WTC11 (cell line): ENCODE measurements at regions of chr3 and their contacts with region 1.

Region 1: DNA sequence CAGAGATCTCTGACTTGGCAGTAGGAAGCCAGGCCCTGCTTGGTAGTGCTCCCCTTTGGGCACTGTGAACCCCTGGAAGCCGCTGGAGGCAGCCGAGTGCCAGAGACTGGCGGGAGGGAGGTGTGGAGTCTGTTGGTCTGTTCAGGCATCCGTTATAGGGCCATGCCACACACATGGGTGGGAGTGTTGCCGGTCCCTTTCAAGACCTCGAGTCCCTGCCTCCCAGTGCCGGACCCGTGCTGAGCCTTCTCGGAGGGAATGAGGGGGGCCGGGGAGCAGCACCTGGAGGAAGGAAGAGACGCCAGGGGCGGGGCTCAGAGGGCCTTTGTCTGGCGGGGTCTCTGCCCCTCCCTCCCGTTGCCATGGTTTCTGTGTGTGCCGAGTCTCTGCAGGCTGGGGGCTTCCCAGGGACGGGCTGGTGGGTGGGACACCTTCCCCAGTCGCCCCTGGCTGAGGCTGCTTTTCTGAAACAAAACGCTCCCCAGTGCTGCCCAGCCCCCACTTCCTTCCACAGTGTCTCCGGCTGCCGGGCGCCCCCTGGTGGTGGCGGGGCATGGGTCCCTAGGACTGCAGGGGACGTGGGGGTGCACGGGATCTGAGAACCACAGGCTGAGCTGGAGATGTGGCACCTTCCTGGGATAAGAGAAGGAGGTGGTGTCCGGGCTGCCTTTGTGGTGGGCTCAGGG is 10.0 kb downstream of the GNAI2 start:
- DNase-seq: peak; percentile 98
- ATAC-seq: peak; percentile 73
- H3K4me3 Mint-ChIP-seq: peak overlapping the region; percentile 40
- H3K27ac Mint-ChIP-seq: peak overlapping the region; percentile 91
- H3K4me1 Mint-ChIP-seq: peaks cover 59% of the 10 kb centered on the region
- H3K27me3 Mint-ChIP-seq: no peaks in the 10 kb centered on the region
- CTCF ChIP-seq: peak; percentile 99

Region 2: DNA sequence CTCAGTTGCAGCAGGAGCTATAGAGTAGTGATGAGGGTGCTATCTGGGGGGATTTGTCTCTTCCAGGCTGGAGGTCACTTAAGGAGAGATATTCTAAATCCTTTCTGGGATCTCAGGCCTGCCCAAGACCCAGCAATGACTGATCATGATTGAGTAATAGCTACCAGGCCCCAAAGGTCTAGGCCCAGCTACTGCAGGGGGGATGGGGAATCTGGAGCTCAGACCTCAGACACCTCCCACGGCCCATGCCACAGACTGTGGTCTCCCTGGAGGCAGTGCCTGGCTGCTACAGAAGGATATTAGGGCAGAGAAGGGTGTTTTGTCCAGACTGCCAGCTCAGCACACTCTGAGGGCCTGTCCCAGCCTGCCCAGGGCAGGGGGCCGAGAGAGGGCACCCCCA is 34.0 kb before region 1 on chr3:
- CTCF ChIA-PET with region 1: interaction called, 32 read pairs
- POLR2A ChIA-PET with region 1: no interaction called
- DNase-seq: no peak
- ATAC-seq: no peak
- H3K4me3 Mint-ChIP-seq: no peak overlapping the region
- H3K27ac Mint-ChIP-seq: no peak overlapping the region
- H3K4me1 Mint-ChIP-seq: peaks cover 6% of the 10 kb centered on the region; the same call in 1 of the 2 replicates
- H3K27me3 Mint-ChIP-seq: peaks cover 9% of the 10 kb centered on the region
- CTCF ChIP-seq: no peak

Region 3: GRCh38 chr3:50227390-50228183 is 18.4 kb before region 1 on chr3:
- CTCF ChIA-PET with region 1: interaction called, 154 read pairs
- POLR2A ChIA-PET with region 1: interaction called, 22 read pairs
- DNase-seq: peak; percentile 92
- ATAC-seq: peak; percentile 75
- H3K4me3 Mint-ChIP-seq: peak overlapping the region; percentile 96
- H3K27ac Mint-ChIP-seq: peak overlapping the region; percentile 89
- H3K4me1 Mint-ChIP-seq: peaks cover 24% of the 10 kb centered on the region
- H3K27me3 Mint-ChIP-seq: peaks cover 4% of the 10 kb centered on the region
- CTCF ChIP-seq: peak; percentile 61

Region 4: DNA sequence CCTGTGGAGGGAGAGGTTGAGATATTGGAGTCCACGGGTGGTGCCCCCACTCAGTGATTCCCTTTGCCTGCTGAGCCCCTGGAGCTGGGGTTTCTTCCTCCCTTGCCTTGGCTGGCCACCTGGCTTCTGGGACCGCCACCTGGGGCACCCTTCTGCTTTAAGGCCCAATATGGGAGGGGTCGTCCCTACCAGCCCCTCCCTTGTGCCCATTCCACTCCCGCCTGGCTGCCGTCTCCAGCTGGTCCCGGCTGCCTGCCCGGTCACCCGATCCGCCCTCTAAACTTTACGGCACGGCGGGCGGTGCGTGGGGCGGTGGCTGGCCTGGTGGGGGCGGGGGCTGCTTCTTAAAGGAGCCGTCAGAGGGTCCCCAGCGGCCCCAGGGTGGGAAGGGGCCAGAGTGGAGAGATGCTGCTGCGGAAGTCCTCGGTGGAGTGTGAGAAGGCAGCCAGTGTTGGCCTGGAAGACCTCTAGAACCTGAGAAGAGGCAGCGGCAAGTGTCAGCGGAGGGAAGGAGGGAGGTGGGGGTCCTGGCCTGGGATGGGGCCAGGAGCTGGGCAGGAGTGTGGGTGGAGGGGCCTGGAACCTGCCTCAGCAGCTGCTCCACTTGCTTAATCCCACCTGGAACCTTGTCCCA is 21.4 kb after region 1 on chr3:
- CTCF ChIA-PET with region 1: interaction called, 49 read pairs
- POLR2A ChIA-PET with region 1: interaction called, 10 read pairs
- DNase-seq: peak; percentile 52
- ATAC-seq: no peak
- H3K4me3 Mint-ChIP-seq: peak overlapping the region; percentile 24; the same call in 1 of the 2 replicates
- H3K27ac Mint-ChIP-seq: no peak overlapping the region
- H3K4me1 Mint-ChIP-seq: peaks cover 51% of the 10 kb centered on the region
- H3K27me3 Mint-ChIP-seq: no peaks in the 10 kb centered on the region; the same call in none of the 2 replicates
- CTCF ChIP-seq: no peak

Region 5: DNA sequence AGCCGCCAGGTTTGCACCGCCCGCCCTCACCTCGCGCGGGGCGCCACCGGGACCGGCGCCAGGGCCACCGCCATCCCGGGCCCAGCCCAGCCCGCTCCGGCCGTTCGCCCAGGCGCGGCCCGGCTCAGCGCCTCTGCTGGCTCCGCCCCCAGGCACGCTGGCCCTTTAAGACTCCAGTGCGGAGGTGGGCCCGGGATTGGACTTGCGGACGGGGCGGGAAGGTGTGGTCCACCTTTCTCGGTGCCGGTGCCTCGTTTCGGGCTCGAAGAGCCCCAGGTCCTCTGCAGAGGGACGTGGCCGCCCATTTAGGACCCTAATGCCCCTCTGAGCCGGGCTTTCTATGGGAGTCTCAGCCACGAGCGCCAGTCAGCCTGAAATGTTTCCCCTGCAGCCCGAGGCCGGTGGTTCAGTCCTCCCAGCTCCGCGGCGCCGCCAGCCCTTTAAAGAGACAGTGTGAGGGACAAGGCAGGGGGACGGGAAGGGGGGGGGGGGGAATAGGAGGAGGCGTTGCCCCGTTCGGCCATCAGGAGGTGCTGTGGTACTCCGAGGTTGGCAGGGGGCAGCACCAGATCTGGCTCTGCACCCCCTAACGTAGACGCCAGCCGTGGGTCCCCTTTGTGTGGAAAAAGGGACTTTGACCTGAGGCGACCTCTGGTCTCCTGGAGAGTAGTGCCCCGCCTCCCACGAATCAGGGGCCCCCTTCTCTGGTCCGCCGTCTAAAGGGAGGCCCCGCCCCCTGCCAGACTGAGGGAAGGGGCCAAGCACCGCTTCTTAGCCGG is 75.6 kb after region 1 on chr3:
- CTCF ChIA-PET with region 1: interaction called, 10 read pairs
- POLR2A ChIA-PET with region 1: interaction called, 3 read pairs
- DNase-seq: peak; percentile 90
- ATAC-seq: peak; percentile 71
- H3K4me3 Mint-ChIP-seq: peak overlapping the region; percentile 88
- H3K27ac Mint-ChIP-seq: peak overlapping the region; percentile 97
- H3K4me1 Mint-ChIP-seq: peaks cover 40% of the 10 kb centered on the region
- H3K27me3 Mint-ChIP-seq: no peaks in the 10 kb centered on the region
- CTCF ChIP-seq: peak; percentile 56; the same call in 1 of the 2 replicates

Region 6: DNA sequence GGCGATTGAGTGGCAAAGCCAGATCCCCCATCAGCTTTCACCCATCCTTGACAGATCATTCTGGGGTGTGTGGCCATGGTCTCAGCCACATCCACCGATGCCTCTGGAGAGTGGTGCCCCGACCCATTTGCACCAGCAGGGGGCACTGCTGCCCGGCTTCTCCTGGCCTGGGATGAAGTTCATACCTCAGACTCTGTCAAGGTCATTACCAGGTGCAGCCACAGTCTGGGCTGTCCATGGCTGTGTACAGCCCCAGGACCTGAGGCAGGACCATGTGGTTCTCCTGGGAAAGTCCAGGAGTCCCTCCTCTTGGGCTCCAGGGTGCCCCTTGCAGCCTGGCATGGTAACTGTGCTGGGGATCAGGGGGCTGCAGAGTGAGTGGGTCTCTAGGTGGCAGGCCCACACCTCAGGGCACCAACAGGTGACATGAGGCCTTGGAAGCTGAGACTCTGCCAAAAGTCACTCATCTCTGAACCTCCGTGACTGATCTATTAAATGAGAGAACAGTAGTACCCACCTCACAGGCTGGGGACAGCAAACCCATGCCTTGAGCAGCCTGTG is 190.2 kb after region 1 on chr3:
- CTCF ChIA-PET with region 1: no interaction called
- POLR2A ChIA-PET with region 1: no interaction called
- DNase-seq: peak; percentile 89
- ATAC-seq: peak; percentile 92
- H3K4me3 Mint-ChIP-seq: no peak overlapping the region
- H3K27ac Mint-ChIP-seq: no peak overlapping the region
- H3K4me1 Mint-ChIP-seq: no peaks in the 10 kb centered on the region; the same call in 1 of the 2 replicates
- H3K27me3 Mint-ChIP-seq: no peaks in the 10 kb centered on the region
- CTCF ChIP-seq: peak; percentile 91